Mammary epithelial cell (primary cell): ENCODE measurements at regions of chr6 and their contacts with region 1.

Region 1: GRCh38 chr6:158599635-158600034 is 39.7 kb downstream of the TMEM181 start:
- DNase-seq: no peak
- H3K4me3 ChIP-seq: no peak overlapping the region
- H3K27ac ChIP-seq: no peak overlapping the region
- H3K4me1 ChIP-seq: no peaks in the 10 kb centered on the region
- H3K27me3 ChIP-seq: no peaks in the 10 kb centered on the region
- CTCF ChIP-seq: no peak

Region 2: GRCh38 chr6:158559895-158560835 is 39.5 kb before region 1 on chr6 and contains the start of gene TMEM181:
- CTCF ChIA-PET with region 1: no interaction called
- dilution Hi-C with region 1: no loop called
- in situ Hi-C with region 1: no loop called
- intact Hi-C with region 1: loop called (anchors 5 kb)
- DNase-seq: peak; percentile 78
- H3K4me3 ChIP-seq: peak within 1 kb of the TSS; percentile 77 to 96 (median 86)
- H3K27ac ChIP-seq: peak within 1 kb of the TSS; percentile 82
- H3K4me1 ChIP-seq: peaks cover 24% of the 10 kb centered on the region
- H3K27me3 ChIP-seq: no peaks in the 10 kb centered on the region
- CTCF ChIP-seq: no peak
- total RNA-seq, gene TMEM181: 29.8 to 45.3 TPM

Region 3: GRCh38 chr6:158697811-158698210 is 98.2 kb after region 1 on chr6:
- CTCF ChIA-PET with region 1: no interaction called
- dilution Hi-C with region 1: loop called (anchors 5 kb)
- in situ Hi-C with region 1: no loop called
- intact Hi-C with region 1: no loop called
- DNase-seq: no peak
- H3K4me3 ChIP-seq: no peak overlapping the region
- H3K27ac ChIP-seq: no peak overlapping the region
- H3K4me1 ChIP-seq: no peaks in the 10 kb centered on the region
- H3K27me3 ChIP-seq: no peaks in the 10 kb centered on the region
- CTCF ChIP-seq: no peak

Region 4: DNA sequence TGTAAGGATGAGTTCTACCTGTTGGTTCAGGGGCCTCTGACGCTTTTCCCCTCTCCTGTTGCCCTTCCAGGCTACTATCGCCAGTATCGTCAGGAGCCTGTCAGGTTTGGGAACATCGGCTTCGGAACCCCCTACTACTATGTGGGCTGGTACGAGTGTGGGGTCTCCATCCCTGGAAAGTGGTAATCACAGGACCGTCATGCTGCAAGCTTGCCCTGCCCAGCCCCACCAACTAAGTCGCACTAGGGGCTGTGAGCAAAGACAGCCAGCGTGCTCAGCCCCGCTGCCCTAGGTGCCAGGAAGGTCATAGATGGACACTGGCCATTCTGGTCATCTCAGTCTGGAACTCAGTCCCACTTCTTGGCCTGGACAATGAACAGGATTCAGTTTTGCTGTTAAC is 671.6 kb after region 1 on chr6:
- CTCF ChIA-PET with region 1: no interaction called
- dilution Hi-C with region 1: no loop called
- in situ Hi-C with region 1: no loop called
- intact Hi-C with region 1: no loop called
- DNase-seq: no peak
- H3K4me3 ChIP-seq: no peak overlapping the region
- H3K27ac ChIP-seq: no peak overlapping the region
- H3K4me1 ChIP-seq: no peaks in the 10 kb centered on the region
- H3K27me3 ChIP-seq: no peaks in the 10 kb centered on the region
- CTCF ChIP-seq: no peak